ENCODE measurements at regions of chr2 and their contacts with region 1.

Region 1: DNA sequence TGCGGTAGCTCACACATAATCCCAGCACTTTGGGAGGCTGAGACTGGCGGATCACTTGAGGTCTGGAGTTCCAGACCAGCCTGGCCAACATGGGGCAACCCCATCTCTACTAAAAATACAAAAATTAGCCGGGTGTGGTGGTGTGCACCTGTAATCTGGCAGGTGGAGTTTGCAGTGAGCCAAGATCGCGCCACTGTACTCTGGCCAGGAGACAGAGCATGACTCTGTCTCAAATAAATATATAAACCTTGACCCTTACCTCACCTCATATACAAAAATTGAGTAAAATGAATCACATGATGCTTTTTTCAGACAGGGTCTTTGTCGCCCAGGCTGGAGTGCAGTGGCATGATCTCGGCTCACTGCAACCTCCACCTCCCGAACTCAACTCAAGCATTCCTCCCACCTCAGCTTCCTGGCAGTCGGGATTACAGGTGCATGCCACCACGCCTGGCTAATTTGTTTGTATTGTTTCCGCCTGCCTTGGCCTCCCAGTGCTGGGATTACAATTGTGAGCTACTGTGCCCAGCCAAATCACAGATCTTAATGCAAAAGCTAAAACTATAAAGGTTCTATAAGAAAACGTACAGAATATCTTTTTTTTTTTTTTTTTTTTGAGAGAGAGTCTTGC is 25.3 kb downstream of the XPO1 start:
- DNase-seq: peak in 1 of 5 donors; percentile 11
- H3K4me3 ChIP-seq: no peak overlapping the region
- H3K27ac ChIP-seq: no peak overlapping the region
- H3K4me1 ChIP-seq: no peaks in the 10 kb centered on the region
- H3K27me3 ChIP-seq: no peaks in the 10 kb centered on the region
- CTCF ChIP-seq: no peak
- EP300 ChIP-seq: no peak
- POLR2A ChIP-seq: no peak

Region 2: GRCh38 chr2:61204781-61205531 is 307.9 kb before region 1 on chr2:
- intact Hi-C with region 1: loop called in 1 of 4 experiments (anchors 10 kb)
- DNase-seq: no peak
- H3K4me3 ChIP-seq: no peak overlapping the region
- H3K27ac ChIP-seq: no peak overlapping the region
- H3K4me1 ChIP-seq: no peaks in the 10 kb centered on the region
- H3K27me3 ChIP-seq: no peaks in the 10 kb centered on the region
- CTCF ChIP-seq: no peak
- EP300 ChIP-seq: no peak
- POLR2A ChIP-seq: no peak

Region 3: GRCh38 chr2:61588566-61588965 is 75.7 kb after region 1 on chr2:
- intact Hi-C with region 1: no loop called
- DNase-seq: no peak
- H3K4me3 ChIP-seq: no peak overlapping the region
- H3K27ac ChIP-seq: no peak overlapping the region
- H3K4me1 ChIP-seq: no peaks in the 10 kb centered on the region
- H3K27me3 ChIP-seq: no peaks in the 10 kb centered on the region
- CTCF ChIP-seq: no peak
- EP300 ChIP-seq: no peak
- POLR2A ChIP-seq: no peak

Measured in ovary (tissue), 10 donors.